Activated CD4-positive, alpha-beta memory T cell treated with anti-CD3 and anti-CD28 coated beads for 36 hours (primary cell): ENCODE measurements at regions of chr15 and their contacts with region 1.

Region 1: GRCh38 chr15:44882499-44882968 is 74.0 kb upstream of the TERB2 start:
- DNase-seq: peak; percentile 82
- H3K4me3 Mint-ChIP-seq: peak overlapping the region; percentile 8
- H3K27ac Mint-ChIP-seq: peak overlapping the region; percentile 59
- H3K4me1 Mint-ChIP-seq: peaks cover 34% of the 10 kb centered on the region
- H3K27me3 Mint-ChIP-seq: peaks cover 11% of the 10 kb centered on the region

Region 2: GRCh38 chr15:44788748-44789147 is 93.8 kb before region 1 on chr15:
- CTCF ChIA-PET with region 1: no interaction called
- POLR2A ChIA-PET with region 1: no interaction called
- intact Hi-C with region 1: loop called (anchors 1 kb)
- DNase-seq: peak; percentile 72
- H3K4me3 Mint-ChIP-seq: peak overlapping the region; percentile 37
- H3K27ac Mint-ChIP-seq: peak overlapping the region; percentile 79
- H3K4me1 Mint-ChIP-seq: peaks cover 32% of the 10 kb centered on the region
- H3K27me3 Mint-ChIP-seq: no peaks in the 10 kb centered on the region

Region 3: DNA sequence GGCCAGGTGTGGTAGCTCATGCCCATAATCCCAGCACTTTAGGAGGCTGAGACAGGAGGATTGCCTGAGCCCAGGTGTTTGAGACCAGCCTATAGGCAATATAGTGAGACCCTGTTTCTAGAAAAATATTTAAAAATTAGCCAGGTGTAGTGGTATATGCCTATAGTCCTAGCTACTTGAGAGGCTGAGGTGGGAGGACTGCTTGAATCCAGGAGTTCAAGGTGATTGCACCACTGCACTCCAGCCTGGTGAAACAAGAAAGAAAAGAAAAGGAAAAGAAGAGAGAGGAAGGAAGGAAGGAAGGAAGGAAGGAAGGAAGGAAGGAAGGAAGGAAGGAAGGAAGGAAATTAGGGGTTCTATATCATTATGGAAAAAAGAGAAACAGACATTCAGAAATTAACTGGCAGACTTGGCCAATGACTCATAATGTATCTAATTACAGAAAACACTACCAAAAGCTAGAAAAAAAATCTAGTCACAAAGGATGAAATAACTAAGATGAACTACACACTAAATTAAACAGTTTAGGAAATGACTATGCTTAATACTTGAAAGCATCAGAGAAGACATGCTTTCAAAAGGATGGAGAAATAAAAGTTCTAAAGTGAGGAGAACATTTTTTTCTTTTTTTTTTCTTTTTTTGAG is 28.6 kb after region 1 on chr15:
- CTCF ChIA-PET with region 1: no interaction called
- POLR2A ChIA-PET with region 1: interaction called, 3 read pairs
- intact Hi-C with region 1: loop called (anchors 1 kb)
- DNase-seq: no peak
- H3K4me3 Mint-ChIP-seq: no peak overlapping the region
- H3K27ac Mint-ChIP-seq: peak overlapping the region; percentile 51
- H3K4me1 Mint-ChIP-seq: peaks cover 8% of the 10 kb centered on the region
- H3K27me3 Mint-ChIP-seq: no peaks in the 10 kb centered on the region

Region 4: DNA sequence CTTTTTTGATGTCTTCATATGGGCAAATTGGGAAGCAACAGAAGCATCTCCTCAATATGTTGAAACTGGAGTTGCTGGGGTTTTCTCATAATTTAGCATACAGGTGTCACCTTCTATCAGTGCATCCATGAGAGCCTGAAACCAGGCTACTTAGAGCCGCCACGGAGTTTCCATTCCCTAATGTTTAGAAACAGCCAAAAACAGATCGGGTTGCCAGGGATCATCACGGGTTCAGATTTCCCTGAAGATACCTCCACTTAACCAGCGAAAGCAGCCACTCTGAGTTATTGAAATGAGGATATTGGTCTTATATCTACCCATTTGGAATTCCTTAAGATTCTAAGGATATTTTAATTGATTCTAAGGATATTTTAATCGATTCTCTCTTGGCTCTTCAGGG is 88.5 kb after region 1 on chr15:
- CTCF ChIA-PET with region 1: no interaction called
- POLR2A ChIA-PET with region 1: no interaction called
- intact Hi-C with region 1: no loop called
- DNase-seq: no peak
- H3K4me3 Mint-ChIP-seq: no peak overlapping the region
- H3K27ac Mint-ChIP-seq: no peak overlapping the region
- H3K4me1 Mint-ChIP-seq: no peaks in the 10 kb centered on the region
- H3K27me3 Mint-ChIP-seq: no peaks in the 10 kb centered on the region